ENCODE measurements at regions of chr4 and their contacts with region 1.

Region 1: GRCh38 chr4:81471588-81472288 is at the start of gene RASGEF1B:
- DNase-seq: peak; percentile 96
- H3K4me3 Mint-ChIP-seq: peak within 1 kb of the TSS; percentile 88
- H3K27ac Mint-ChIP-seq: peak within 1 kb of the TSS; percentile 78
- H3K4me1 Mint-ChIP-seq: peaks cover 32% of the 10 kb centered on the region
- H3K27me3 Mint-ChIP-seq: no peaks in the 10 kb centered on the region
- total RNA-seq, gene RASGEF1B: 4.4 to 4.6 TPM

Region 2: GRCh38 chr4:81421346-81422218 is 50.2 kb before region 1 on chr4:
- CTCF ChIA-PET with region 1: no interaction called
- POLR2A ChIA-PET with region 1: no interaction called
- intact Hi-C with region 1: no loop called
- DNase-seq: no peak
- H3K4me3 Mint-ChIP-seq: no peak overlapping the region
- H3K27ac Mint-ChIP-seq: no peak overlapping the region
- H3K4me1 Mint-ChIP-seq: peaks cover 6% of the 10 kb centered on the region
- H3K27me3 Mint-ChIP-seq: no peaks in the 10 kb centered on the region

Region 3: GRCh38 chr4:81494031-81494431 is 22.3 kb after region 1 on chr4:
- CTCF ChIA-PET with region 1: interaction called, 13 read pairs
- POLR2A ChIA-PET with region 1: interaction called, 4 read pairs
- intact Hi-C with region 1: loop called (anchors 1 kb)
- DNase-seq: no peak
- H3K4me3 Mint-ChIP-seq: no peak overlapping the region
- H3K27ac Mint-ChIP-seq: peak overlapping the region; percentile 64
- H3K4me1 Mint-ChIP-seq: peaks cover 47% of the 10 kb centered on the region
- H3K27me3 Mint-ChIP-seq: no peaks in the 10 kb centered on the region

Region 4: GRCh38 chr4:81651243-81651899 is 179.6 kb after region 1 on chr4:
- CTCF ChIA-PET with region 1: interaction called, 4 read pairs
- POLR2A ChIA-PET with region 1: interaction called, 10 read pairs
- intact Hi-C with region 1: loop called (anchors 5 kb)
- DNase-seq: no peak
- H3K4me3 Mint-ChIP-seq: no peak overlapping the region
- H3K27ac Mint-ChIP-seq: peak overlapping the region; percentile 84
- H3K4me1 Mint-ChIP-seq: peaks cover 57% of the 10 kb centered on the region
- H3K27me3 Mint-ChIP-seq: no peaks in the 10 kb centered on the region

Region 5: GRCh38 chr4:81827577-81828202 is 356.0 kb after region 1 on chr4:
- CTCF ChIA-PET with region 1: interaction called, 10 read pairs
- POLR2A ChIA-PET with region 1: no interaction called
- intact Hi-C with region 1: loop called (anchors 5 kb)
- DNase-seq: peak; percentile 49
- H3K4me3 Mint-ChIP-seq: no peak overlapping the region
- H3K27ac Mint-ChIP-seq: peak overlapping the region; percentile 16
- H3K4me1 Mint-ChIP-seq: peaks cover 15% of the 10 kb centered on the region
- H3K27me3 Mint-ChIP-seq: peaks cover 7% of the 10 kb centered on the region

Region 6: GRCh38 chr4:81919238-81919637 is 447.5 kb after region 1 on chr4:
- CTCF ChIA-PET with region 1: interaction called, 12 read pairs
- POLR2A ChIA-PET with region 1: no interaction called
- intact Hi-C with region 1: loop called (anchors 2 kb)
- DNase-seq: no peak
- H3K4me3 Mint-ChIP-seq: no peak overlapping the region
- H3K27ac Mint-ChIP-seq: no peak overlapping the region
- H3K4me1 Mint-ChIP-seq: peaks cover 2% of the 10 kb centered on the region
- H3K27me3 Mint-ChIP-seq: peaks cover 6% of the 10 kb centered on the region

Region 7: GRCh38 chr4:82284858-82285805 is 813.4 kb after region 1 on chr4:
- CTCF ChIA-PET with region 1: no interaction called
- POLR2A ChIA-PET with region 1: no interaction called
- intact Hi-C with region 1: loop called (anchors 1 kb)
- DNase-seq: peak; percentile 100
- H3K4me3 Mint-ChIP-seq: peak overlapping the region; percentile 61
- H3K27ac Mint-ChIP-seq: peak overlapping the region; percentile 38
- H3K4me1 Mint-ChIP-seq: peaks cover 12% of the 10 kb centered on the region
- H3K27me3 Mint-ChIP-seq: peaks cover 3% of the 10 kb centered on the region

Measured in activated CD4-positive, alpha-beta memory T cell treated with anti-CD3 and anti-CD28 coated beads for 36 hours (primary cell).